ENCODE measurements at regions of chr19 and their contacts with region 1.

Region 1: GRCh38 chr19:48578891-48579290 is 26.9 kb downstream of the SULT2B1 start:
- DNase-seq: no peak
- ATAC-seq: no peak
- H3K4me3 ChIP-seq: no peak overlapping the region
- H3K4me3 Mint-ChIP-seq: no peak overlapping the region
- H3K27ac ChIP-seq: no peak overlapping the region
- H3K27ac Mint-ChIP-seq: no peak overlapping the region
- H3K4me1 ChIP-seq: no peaks in the 10 kb centered on the region
- H3K4me1 Mint-ChIP-seq: peaks cover under 1% of the 10 kb centered on the region
- H3K27me3 ChIP-seq: no peaks in the 10 kb centered on the region
- H3K27me3 Mint-ChIP-seq: peaks cover 2% of the 10 kb centered on the region
- CTCF ChIP-seq: no peak

Region 2: DNA sequence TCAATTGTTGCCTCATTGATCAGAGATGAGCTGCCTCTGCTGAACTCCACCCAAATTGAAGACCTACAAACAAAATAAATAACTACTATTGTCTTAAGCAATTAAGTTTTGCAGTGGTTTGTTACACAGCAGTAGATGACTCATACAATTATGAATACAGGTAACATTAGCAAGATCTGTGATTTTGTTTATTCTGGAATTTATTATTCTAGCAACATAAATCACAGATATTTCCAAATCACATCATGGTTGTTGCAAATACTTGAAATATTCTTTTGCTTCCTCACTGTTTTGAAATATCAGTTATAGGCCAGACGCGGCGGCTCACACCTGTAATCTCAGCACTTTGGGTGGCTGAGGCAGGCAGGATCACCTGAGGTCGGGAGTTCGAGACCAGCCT is 54.2 kb before region 1 on chr19:
- CTCF ChIA-PET with region 1: no interaction called
- POLR2A ChIA-PET with region 1: no interaction called
- intact Hi-C with region 1: no loop called
- DNase-seq: no peak
- ATAC-seq: no peak
- H3K4me3 ChIP-seq: no peak overlapping the region
- H3K4me3 Mint-ChIP-seq: no peak overlapping the region
- H3K27ac ChIP-seq: no peak overlapping the region
- H3K27ac Mint-ChIP-seq: no peak overlapping the region
- H3K4me1 ChIP-seq: no peaks in the 10 kb centered on the region
- H3K4me1 Mint-ChIP-seq: no peaks in the 10 kb centered on the region
- H3K27me3 ChIP-seq: no peaks in the 10 kb centered on the region
- H3K27me3 Mint-ChIP-seq: no peaks in the 10 kb centered on the region
- CTCF ChIP-seq: no peak

Region 3: GRCh38 chr19:48608798-48609263 is 29.9 kb after region 1 on chr19:
- CTCF ChIA-PET with region 1: interaction called, 20 read pairs
- POLR2A ChIA-PET with region 1: interaction called, 3 read pairs
- intact Hi-C with region 1: no loop called
- DNase-seq: peak in 8 of 9 experiments; percentile 28 to 76 (median 54)
- ATAC-seq: peak; percentile 91
- H3K4me3 ChIP-seq: no peak overlapping the region
- H3K4me3 Mint-ChIP-seq: no peak overlapping the region
- H3K27ac ChIP-seq: no peak overlapping the region
- H3K27ac Mint-ChIP-seq: no peak overlapping the region
- H3K4me1 ChIP-seq: peaks cover 6% of the 10 kb centered on the region
- H3K4me1 Mint-ChIP-seq: peaks cover 4% of the 10 kb centered on the region
- H3K27me3 ChIP-seq: no peaks in the 10 kb centered on the region
- H3K27me3 Mint-ChIP-seq: no peaks in the 10 kb centered on the region
- CTCF ChIP-seq: peak; percentile 50

Measured in CD8-positive, alpha-beta T cell (primary cell).